ENCODE measurements at regions of chr12 and their contacts with region 1.

Region 1: GRCh38 chr12:25958428-25959070 is at the start of gene RASSF8:
- DNase-seq: no peak
- H3K4me3 ChIP-seq: peak within 1 kb of the TSS; percentile 79 to 92
- H3K27ac ChIP-seq: peak within 1 kb of the TSS; percentile 98 to 99
- H3K4me1 ChIP-seq: peaks cover 3 to 31% of the 10 kb centered on the region in 2 donors
- H3K27me3 ChIP-seq: no peaks in the 10 kb centered on the region
- CTCF ChIP-seq: no peak
- total RNA-seq, gene RASSF8: 92.1 TPM

Region 2: GRCh38 chr12:25250744-25251730 is 707.5 kb before region 1 on chr12 and contains the start of gene KRAS:
- intact Hi-C with region 1: loop called (anchors 10 kb)
- DNase-seq: peak; percentile 82 to 98
- H3K4me3 ChIP-seq: peak within 1 kb of the TSS; percentile 93
- H3K27ac ChIP-seq: peak within 1 kb of the TSS; percentile 94 to 96
- H3K4me1 ChIP-seq: peaks cover 2 to 4% of the 10 kb centered on the region in 2 donors
- H3K27me3 ChIP-seq: no peaks in the 10 kb centered on the region
- CTCF ChIP-seq: no peak
- total RNA-seq, gene KRAS: 9.8 TPM

Region 3: DNA sequence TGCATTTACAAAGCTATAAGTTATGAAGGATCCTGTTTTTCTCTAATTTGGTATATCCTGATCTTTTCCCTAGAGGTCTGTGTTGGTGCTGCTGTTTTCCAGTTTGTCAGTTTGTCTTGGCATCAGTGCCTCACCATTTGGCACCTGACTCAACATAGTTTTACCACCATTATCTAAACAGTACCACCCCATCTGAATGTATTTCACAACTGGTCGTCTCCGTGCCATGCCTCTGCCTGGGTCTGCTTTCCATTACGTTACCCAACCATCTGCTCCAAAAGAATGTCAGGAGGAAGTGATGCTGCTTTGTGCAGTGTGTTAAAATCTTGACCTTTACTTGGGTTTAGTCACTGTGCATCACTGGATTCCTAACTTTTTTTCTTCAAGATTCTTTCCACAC is 129.4 kb before region 1 on chr12:
- intact Hi-C with region 1: loop called (anchors 2 kb)
- DNase-seq: peak in 1 of 2 donors; percentile 86
- H3K4me3 ChIP-seq: no peak overlapping the region
- H3K27ac ChIP-seq: peak overlapping the region in 1 of 2 donors; percentile 31
- H3K4me1 ChIP-seq: peaks cover 0 to 7% of the 10 kb centered on the region in 2 donors
- H3K27me3 ChIP-seq: no peaks in the 10 kb centered on the region
- CTCF ChIP-seq: no peak

Region 4: DNA sequence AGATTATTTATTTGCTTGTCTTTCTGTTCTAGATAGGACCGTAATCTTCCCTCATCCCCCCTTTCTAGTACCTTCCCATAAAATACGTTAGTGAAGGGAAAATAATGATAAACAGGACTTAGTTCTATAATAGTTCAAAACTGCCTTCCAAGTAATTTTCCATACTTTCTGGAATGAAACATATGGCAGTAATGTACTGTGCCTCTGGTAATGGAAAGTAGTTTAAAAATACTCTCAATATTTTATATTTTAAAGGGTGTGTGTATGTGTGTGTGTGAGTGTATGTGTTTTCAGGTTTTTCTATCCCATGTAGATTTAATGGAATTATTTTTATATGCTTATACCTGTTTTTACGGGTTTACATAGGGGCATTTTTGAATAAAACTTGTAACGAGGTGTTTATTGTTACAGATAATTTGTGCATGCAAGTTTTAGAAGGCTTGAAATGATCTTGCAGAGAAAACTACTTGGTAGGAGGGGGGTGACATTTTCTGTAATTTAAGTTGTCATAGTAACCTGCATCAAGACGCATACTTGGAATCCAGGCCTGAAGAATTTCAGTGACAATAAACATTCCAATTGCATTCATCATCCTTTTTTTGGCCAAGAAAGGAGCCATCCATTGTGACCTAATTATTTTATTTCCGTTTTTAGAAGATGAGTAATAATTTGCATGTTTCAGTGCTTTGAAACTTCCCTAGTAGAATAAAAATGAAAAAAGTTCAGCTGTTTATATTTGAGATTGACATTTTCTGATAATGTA is 38.8 kb after region 1 on chr12:
- intact Hi-C with region 1: loop called (anchors 5 kb)
- DNase-seq: no peak
- H3K4me3 ChIP-seq: no peak overlapping the region
- H3K27ac ChIP-seq: peak overlapping the region; percentile 47 to 81
- H3K4me1 ChIP-seq: peaks cover 6 to 39% of the 10 kb centered on the region in 2 donors
- H3K27me3 ChIP-seq: no peaks in the 10 kb centered on the region
- CTCF ChIP-seq: no peak

Region 5: GRCh38 chr12:26028953-26029735 is 70.6 kb after region 1 on chr12:
- intact Hi-C with region 1: loop called (anchors 5 kb)
- DNase-seq: no peak
- H3K4me3 ChIP-seq: peak overlapping the region in 1 of 2 donors; percentile 6
- H3K27ac ChIP-seq: peak overlapping the region in 1 of 2 donors; percentile 32
- H3K4me1 ChIP-seq: peaks cover 0 to 49% of the 10 kb centered on the region in 2 donors
- H3K27me3 ChIP-seq: no peaks in the 10 kb centered on the region
- CTCF ChIP-seq: peak; percentile 47 to 76 (median 70)

Region 6: GRCh38 chr12:26195641-26196420 is 237.3 kb after region 1 on chr12:
- intact Hi-C with region 1: loop called (anchors 5 kb)
- DNase-seq: peak in 1 of 2 donors; percentile 79
- H3K4me3 ChIP-seq: peak overlapping the region; percentile 58 to 74
- H3K27ac ChIP-seq: peak overlapping the region; percentile 88 to 90
- H3K4me1 ChIP-seq: peaks cover 0 to 21% of the 10 kb centered on the region in 2 donors
- H3K27me3 ChIP-seq: no peaks in the 10 kb centered on the region
- CTCF ChIP-seq: no peak